ENCODE measurements at regions of chr11 and their contacts with region 1.

Region 1: DNA sequence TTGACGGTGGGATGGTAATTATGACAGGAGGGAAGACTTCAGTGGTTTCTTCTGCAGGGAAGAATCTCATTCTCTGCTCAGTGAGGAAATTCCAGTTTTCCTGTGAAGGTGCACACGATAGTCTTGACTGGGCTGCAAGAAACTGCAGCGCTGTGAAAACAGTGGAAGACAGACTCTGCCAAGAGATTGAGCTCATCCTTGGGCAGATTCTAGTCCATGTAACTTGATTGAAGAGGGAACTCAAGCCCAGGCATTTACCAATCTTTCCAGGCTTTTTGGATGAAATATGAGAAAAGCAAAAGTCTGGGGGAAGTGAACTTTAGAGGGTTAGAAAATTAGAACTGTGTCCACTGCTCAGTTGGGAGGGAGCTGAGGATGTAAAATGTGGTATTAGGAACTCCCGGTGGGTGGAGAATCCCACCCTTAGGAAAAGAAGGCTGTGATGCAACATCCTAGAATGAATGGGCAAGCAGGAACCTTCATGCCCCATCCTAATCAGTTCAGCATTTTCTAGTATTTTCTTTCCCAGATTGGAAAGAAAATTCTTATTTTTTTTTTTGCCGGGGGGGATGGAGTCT is 212.6 kb downstream of the DBX1 start:
- DNase-seq: no peak
- ATAC-seq: no peak
- H3K4me3 ChIP-seq: no peak overlapping the region
- H3K27ac ChIP-seq: no peak overlapping the region
- H3K4me1 ChIP-seq: peaks cover 8% of the 10 kb centered on the region
- H3K27me3 ChIP-seq: no peaks in the 10 kb centered on the region
- CTCF ChIP-seq: no peak

Region 2: GRCh38 chr11:19398772-19399527 is 548.7 kb before region 1 on chr11:
- intact Hi-C with region 1: no loop called
- DNase-seq: no peak
- ATAC-seq: peak; percentile 44 to 66
- H3K4me3 ChIP-seq: no peak overlapping the region
- H3K27ac ChIP-seq: no peak overlapping the region
- H3K4me1 ChIP-seq: peaks cover 9% of the 10 kb centered on the region
- H3K27me3 ChIP-seq: no peaks in the 10 kb centered on the region
- CTCF ChIP-seq: no peak

Region 3: GRCh38 chr11:19714387-19715363 is 233.0 kb before region 1 on chr11:
- intact Hi-C with region 1: no loop called
- DNase-seq: peak; percentile 51
- ATAC-seq: peak; percentile 1 to 14
- H3K4me3 ChIP-seq: peak overlapping the region; percentile 61
- H3K27ac ChIP-seq: no peak overlapping the region
- H3K4me1 ChIP-seq: peaks cover 33% of the 10 kb centered on the region
- H3K27me3 ChIP-seq: peaks cover 19% of the 10 kb centered on the region
- CTCF ChIP-seq: no peak

Region 4: GRCh38 chr11:19846654-19847305 is 100.8 kb before region 1 on chr11:
- intact Hi-C with region 1: no loop called
- DNase-seq: no peak
- ATAC-seq: peak in 1 of 2 donors; percentile 19
- H3K4me3 ChIP-seq: no peak overlapping the region
- H3K27ac ChIP-seq: no peak overlapping the region
- H3K4me1 ChIP-seq: peaks cover 5% of the 10 kb centered on the region
- H3K27me3 ChIP-seq: no peaks in the 10 kb centered on the region
- CTCF ChIP-seq: no peak

Region 5: GRCh38 chr11:20131788-20132666 is 184.4 kb after region 1 on chr11:
- intact Hi-C with region 1: loop called (anchors 10 kb)
- DNase-seq: peak; percentile 63
- ATAC-seq: peak; percentile 67 to 83
- H3K4me3 ChIP-seq: peak overlapping the region; percentile 56
- H3K27ac ChIP-seq: no peak overlapping the region
- H3K4me1 ChIP-seq: peaks cover 10% of the 10 kb centered on the region
- H3K27me3 ChIP-seq: peaks cover 18% of the 10 kb centered on the region
- CTCF ChIP-seq: peak; percentile 84